ENCODE measurements at regions of chr7 and their contacts with region 1.

Region 1: DNA sequence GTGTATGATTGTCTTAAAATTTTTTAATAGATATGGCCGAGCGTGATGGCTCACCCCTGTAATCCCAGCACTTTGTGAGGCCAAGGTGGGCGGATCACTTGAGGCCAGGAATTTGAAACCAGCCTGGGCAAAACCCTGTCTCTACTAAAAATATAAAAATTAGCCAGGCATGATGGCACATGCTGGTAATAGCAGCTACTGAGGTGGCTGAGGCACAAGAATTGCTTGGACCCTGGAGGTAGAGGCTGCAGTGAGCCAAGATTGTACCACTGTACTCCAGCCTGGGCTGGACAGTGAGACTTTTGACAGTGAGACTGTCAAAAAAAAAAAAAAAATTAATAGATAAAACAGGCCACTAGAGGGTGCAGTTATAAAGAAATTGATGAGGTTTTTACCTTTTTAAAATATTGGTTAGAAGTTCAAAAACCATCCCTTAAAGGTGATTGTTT is 20.5 kb downstream of the NOM1 start:
- DNase-seq: peak; percentile 43
- H3K4me3 ChIP-seq: no peak overlapping the region
- H3K27ac ChIP-seq: no peak overlapping the region
- H3K4me1 ChIP-seq: no peaks in the 10 kb centered on the region
- H3K27me3 ChIP-seq: no peaks in the 10 kb centered on the region
- CTCF ChIP-seq: peak; percentile 22 to 61 (median 46)
- POLR2A ChIP-seq: no peak

Region 2: DNA sequence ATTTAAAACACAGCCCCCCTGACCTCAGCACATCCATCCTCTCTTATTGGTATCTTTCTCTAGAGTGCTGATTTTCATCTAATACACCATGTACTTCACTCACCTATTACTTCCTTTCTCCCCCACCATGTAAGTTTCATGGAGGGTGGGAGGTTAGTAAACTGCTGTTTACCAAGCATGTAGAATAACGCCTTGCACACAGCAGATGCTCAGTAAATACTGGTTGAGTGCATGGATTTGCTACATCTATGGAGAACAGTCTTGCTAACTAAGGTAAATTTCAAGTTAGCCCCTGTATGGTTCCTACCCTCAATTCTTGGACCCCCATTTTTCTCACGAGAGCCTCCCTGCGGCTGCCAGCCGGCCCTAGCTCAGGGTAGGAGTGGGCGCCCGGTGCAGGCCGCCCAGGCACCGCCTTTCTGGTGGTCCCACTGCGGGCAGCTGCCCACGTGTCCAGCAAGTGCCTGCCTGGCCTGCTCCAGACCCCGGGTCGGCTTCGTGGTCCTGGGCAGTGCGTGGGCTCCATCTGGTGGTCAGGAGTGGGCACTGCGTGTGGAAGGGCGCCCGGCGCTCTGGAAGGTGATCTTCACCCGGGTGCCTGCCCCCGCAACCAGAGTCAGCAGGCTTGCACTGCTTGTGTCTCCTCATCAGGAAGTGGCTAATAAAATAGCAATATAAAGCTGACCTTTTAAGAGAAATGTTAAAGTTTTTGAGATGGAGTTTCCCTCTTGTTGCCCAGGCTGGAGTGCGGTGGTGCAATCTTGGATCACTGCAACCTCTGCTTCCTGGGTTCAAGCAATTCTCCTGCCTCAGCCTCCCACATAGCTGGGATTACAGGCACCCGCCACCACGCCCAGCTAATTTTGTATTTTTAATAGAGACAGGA is 303.5 kb after region 1 on chr7:
- intact Hi-C with region 1: loop called (anchors 5 kb)
- DNase-seq: peak; percentile 46
- H3K4me3 ChIP-seq: no peak overlapping the region
- H3K27ac ChIP-seq: peak overlapping the region; percentile 47 to 83
- H3K4me1 ChIP-seq: peaks cover 18% of the 10 kb centered on the region
- H3K27me3 ChIP-seq: no peaks in the 10 kb centered on the region
- CTCF ChIP-seq: peak; percentile 91 to 96 (median 92)
- POLR2A ChIP-seq: no peak